ENCODE measurements at regions of chr6 and their contacts with region 1.

Region 1: GRCh38 chr6:8131256-8131897 is 29.0 kb upstream of the EEF1E1 start:
- DNase-seq: peak; percentile 73 to 80
- H3K4me3 ChIP-seq: no peak overlapping the region
- H3K4me3 Mint-ChIP-seq: peak overlapping the region; percentile 46
- H3K27ac Mint-ChIP-seq: peak overlapping the region; percentile 87
- H3K4me1 ChIP-seq: peaks cover 5% of the 10 kb centered on the region; the same call in 1 of the 2 replicates
- H3K4me1 Mint-ChIP-seq: peaks cover 13% of the 10 kb centered on the region
- H3K27me3 ChIP-seq: no peaks in the 10 kb centered on the region
- H3K27me3 Mint-ChIP-seq: no peaks in the 10 kb centered on the region
- CTCF ChIP-seq: peak; percentile 49 to 77

Region 2: DNA sequence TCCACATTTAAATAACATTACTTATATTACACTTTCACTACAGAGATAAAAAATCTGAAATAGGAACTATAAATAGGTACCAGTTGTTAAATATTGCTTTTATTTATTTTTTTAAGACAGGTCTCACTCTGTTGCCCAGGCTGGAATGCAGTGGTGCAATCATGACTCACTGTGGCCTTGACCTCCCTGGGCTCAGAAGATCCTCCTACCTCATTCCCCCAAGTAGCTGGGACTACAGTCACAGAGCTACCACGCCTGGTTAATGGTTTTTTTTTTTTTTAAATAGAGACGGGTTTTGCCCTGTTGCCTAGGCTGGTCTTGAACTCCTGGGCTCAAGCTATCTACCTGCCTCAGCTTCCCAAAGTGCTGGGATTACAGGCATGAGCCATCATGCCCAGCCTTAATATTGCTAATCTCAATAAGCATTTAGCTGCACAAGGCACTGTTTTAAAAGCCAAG is 46.3 kb before region 1 on chr6:
- CTCF ChIA-PET with region 1: no interaction called
- POLR2A ChIA-PET with region 1: no interaction called
- intact Hi-C with region 1: no loop called
- DNase-seq: peak; percentile 50 to 58
- H3K4me3 ChIP-seq: no peak overlapping the region
- H3K4me3 Mint-ChIP-seq: no peak overlapping the region
- H3K27ac Mint-ChIP-seq: no peak overlapping the region
- H3K4me1 ChIP-seq: peaks cover 56% of the 10 kb centered on the region
- H3K4me1 Mint-ChIP-seq: peaks cover 36% of the 10 kb centered on the region
- H3K27me3 ChIP-seq: no peaks in the 10 kb centered on the region
- H3K27me3 Mint-ChIP-seq: no peaks in the 10 kb centered on the region
- CTCF ChIP-seq: no peak

Region 3: DNA sequence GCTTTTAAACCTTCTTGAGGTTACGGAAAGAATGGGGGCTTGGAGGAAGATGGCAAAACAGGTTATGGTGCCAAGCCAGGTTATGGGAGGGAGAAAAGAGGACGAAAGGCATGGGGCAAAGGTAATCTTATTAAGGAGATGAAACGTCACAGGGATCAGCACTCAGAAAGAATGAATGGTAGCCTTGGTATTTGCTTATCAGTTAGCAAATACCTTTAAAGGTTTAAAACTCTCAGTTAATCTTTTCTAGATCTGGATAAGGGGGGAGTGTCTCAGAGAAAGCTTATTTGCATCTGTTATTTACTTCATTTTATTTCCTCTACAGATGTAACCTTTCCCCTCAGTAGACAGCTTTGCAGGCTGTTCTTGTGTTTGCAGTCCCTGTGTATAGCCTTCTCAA is 26.5 kb after region 1 on chr6:
- CTCF ChIA-PET with region 1: interaction called, 4 read pairs
- POLR2A ChIA-PET with region 1: no interaction called
- intact Hi-C with region 1: loop called (anchors 2 kb)
- DNase-seq: peak; percentile 80 to 83
- H3K4me3 ChIP-seq: peak overlapping the region; percentile 30
- H3K4me3 Mint-ChIP-seq: peak overlapping the region; percentile 86
- H3K27ac Mint-ChIP-seq: peak overlapping the region; percentile 82
- H3K4me1 ChIP-seq: peaks cover 53% of the 10 kb centered on the region
- H3K4me1 Mint-ChIP-seq: peaks cover 59% of the 10 kb centered on the region
- H3K27me3 ChIP-seq: no peaks in the 10 kb centered on the region
- H3K27me3 Mint-ChIP-seq: no peaks in the 10 kb centered on the region
- CTCF ChIP-seq: no peak

Region 4: DNA sequence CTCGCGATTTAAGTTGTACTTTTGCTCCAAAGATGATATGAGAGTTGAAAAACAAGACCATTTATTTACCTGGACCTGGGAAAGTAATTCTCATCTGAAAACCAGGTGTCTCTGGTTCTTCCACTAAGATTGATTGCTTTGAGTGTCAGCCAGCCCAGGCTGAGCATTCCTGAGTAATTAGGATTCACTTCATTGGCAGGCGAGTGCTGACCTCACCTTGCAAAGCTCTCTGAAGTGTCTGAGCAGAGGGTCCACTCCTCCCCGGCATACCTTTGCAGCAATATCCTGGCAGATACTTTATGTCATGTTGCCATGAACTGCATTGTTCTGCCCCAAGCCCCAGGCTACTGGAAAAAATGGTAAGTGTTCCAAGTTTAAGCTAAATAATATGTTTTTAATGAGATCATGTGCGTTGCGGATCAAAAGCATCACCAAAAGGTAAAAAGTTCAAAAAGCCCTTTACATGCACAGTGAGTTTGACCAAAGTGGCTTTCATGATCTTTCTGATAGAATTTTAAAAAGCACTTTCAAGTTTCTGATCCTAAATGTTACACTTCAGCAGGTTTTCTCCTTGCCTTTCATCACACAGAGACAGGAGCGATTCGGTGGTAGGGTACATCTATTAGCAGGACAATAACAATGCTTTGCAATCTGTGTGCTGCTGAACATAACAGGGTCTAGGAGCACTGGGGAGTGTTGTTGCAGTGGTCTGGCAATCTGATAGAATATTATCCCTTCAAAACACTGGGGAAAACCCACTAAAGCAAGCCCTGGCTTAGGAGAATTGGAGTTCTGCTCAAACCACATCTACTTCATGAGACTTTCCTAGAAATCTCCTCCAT is 98.8 kb after region 1 on chr6:
- CTCF ChIA-PET with region 1: interaction called, 12 read pairs
- POLR2A ChIA-PET with region 1: no interaction called
- intact Hi-C with region 1: no loop called
- DNase-seq: peak; percentile 79 to 89
- H3K4me3 ChIP-seq: no peak overlapping the region
- H3K4me3 Mint-ChIP-seq: peak overlapping the region; percentile 61
- H3K27ac Mint-ChIP-seq: peak overlapping the region; percentile 83
- H3K4me1 ChIP-seq: peaks cover 54% of the 10 kb centered on the region
- H3K4me1 Mint-ChIP-seq: peaks cover 31% of the 10 kb centered on the region
- H3K27me3 ChIP-seq: no peaks in the 10 kb centered on the region
- H3K27me3 Mint-ChIP-seq: no peaks in the 10 kb centered on the region
- CTCF ChIP-seq: no peak

Region 5: GRCh38 chr6:8382434-8382833 is 251.1 kb after region 1 on chr6:
- CTCF ChIA-PET with region 1: no interaction called
- POLR2A ChIA-PET with region 1: no interaction called
- intact Hi-C with region 1: no loop called
- DNase-seq: no peak
- H3K4me3 ChIP-seq: no peak overlapping the region
- H3K4me3 Mint-ChIP-seq: no peak overlapping the region
- H3K27ac Mint-ChIP-seq: no peak overlapping the region
- H3K4me1 ChIP-seq: peaks cover 5% of the 10 kb centered on the region
- H3K4me1 Mint-ChIP-seq: peaks cover 2% of the 10 kb centered on the region
- H3K27me3 ChIP-seq: no peaks in the 10 kb centered on the region
- H3K27me3 Mint-ChIP-seq: no peaks in the 10 kb centered on the region
- CTCF ChIP-seq: no peak

Region 6: DNA sequence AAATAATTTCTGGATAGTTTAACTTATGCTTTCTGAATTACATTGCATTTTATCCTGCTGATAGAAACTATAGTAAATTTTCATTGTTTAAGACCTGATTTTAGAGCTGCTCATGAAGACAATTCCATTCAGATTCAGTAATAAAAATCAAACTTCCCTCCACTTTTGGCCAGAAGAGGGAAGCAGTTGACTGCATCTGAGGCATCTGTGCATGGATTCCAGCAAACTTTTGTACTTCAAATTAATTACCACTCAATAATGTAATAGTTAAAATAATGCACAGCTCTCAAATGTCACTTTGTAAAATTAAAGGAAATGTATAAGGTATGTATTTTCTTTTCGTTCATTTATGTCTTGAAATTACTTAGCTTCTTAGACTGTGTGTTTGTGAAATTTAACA is 368.2 kb after region 1 on chr6:
- CTCF ChIA-PET with region 1: no interaction called
- POLR2A ChIA-PET with region 1: no interaction called
- intact Hi-C with region 1: loop called (anchors 2 kb)
- DNase-seq: peak in 1 of 2 experiments; percentile 41
- H3K4me3 ChIP-seq: no peak overlapping the region
- H3K4me3 Mint-ChIP-seq: no peak overlapping the region
- H3K27ac Mint-ChIP-seq: no peak overlapping the region
- H3K4me1 ChIP-seq: peaks cover 5% of the 10 kb centered on the region; the same call in 1 of the 2 replicates
- H3K4me1 Mint-ChIP-seq: peaks cover 2% of the 10 kb centered on the region
- H3K27me3 ChIP-seq: no peaks in the 10 kb centered on the region
- H3K27me3 Mint-ChIP-seq: no peaks in the 10 kb centered on the region
- CTCF ChIP-seq: peak; percentile 61 to 62

Region 7: DNA sequence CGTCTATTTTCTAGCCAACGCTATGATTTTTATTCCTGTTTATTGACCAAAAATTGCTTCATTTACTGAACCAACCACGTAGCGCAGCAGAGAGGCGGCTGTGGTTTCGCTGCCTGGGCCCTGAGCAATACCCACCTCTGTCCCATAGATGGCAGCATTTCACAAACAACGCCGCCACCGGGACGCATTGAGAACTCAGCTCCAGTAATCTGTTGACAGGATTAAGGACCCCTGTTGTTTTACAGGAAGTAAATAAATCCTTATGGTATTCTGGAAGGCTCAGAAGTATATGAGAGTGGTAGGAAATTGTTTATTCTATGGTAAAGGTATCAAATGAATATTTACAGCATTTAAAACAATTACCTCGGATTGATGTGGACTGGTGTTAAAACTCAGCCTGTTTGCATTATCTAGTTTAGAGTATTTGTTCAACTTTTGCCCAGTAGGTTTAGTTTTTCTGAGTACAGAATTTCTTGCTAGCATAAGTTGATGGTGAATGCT is 851.9 kb after region 1 on chr6:
- CTCF ChIA-PET with region 1: no interaction called
- POLR2A ChIA-PET with region 1: no interaction called
- intact Hi-C with region 1: loop called (anchors 5 kb)
- DNase-seq: peak; percentile 55 to 74
- H3K4me3 ChIP-seq: no peak overlapping the region
- H3K4me3 Mint-ChIP-seq: no peak overlapping the region
- H3K27ac Mint-ChIP-seq: no peak overlapping the region
- H3K4me1 ChIP-seq: peaks cover 10% of the 10 kb centered on the region; the same call in 1 of the 2 replicates
- H3K4me1 Mint-ChIP-seq: peaks cover 7% of the 10 kb centered on the region
- H3K27me3 ChIP-seq: no peaks in the 10 kb centered on the region
- H3K27me3 Mint-ChIP-seq: no peaks in the 10 kb centered on the region
- CTCF ChIP-seq: peak; percentile 87 to 90

Measured in Caco-2 (cell line).